Keratinocyte (primary cell): ENCODE measurements at regions of chr7 and their contacts with region 1.

Region 1: DNA sequence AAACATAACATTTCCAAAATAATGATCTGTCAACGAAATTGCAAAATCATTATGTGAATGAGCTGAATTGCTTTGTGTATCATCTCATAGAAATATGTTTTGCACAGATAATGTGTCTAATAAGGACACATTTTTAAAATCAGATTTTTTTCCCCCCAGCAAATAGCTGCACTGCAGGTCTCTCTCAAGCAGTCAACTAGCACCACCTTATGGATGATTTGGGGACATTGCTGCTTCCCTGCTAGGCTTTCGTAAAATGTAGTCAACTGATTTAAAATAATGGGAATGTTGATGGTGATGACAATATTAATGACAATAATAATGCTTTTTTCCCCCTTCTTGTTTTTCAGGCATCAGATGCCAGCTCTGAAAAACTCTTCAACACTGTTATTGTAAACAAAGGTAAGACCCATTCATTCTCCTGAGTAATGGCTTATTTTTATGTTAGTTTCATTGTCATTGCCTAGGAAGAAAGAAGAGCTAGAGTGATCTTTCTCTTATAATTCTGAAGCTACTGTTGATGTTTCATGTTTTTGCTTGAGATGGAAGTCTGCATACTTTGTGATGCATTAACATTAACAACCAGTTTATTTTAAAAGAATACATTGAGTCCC is 433.6 kb upstream of the GALNT17 start:
- DNase-seq: no peak
- H3K4me3 ChIP-seq: no peak overlapping the region
- H3K27ac ChIP-seq: no peak overlapping the region
- H3K4me1 ChIP-seq: peaks cover 26% of the 10 kb centered on the region
- H3K27me3 ChIP-seq: no peaks in the 10 kb centered on the region
- CTCF ChIP-seq: peak; percentile 75 to 84 (median 80)

Region 2: GRCh38 chr7:70595753-70596597 is 102.4 kb before region 1 on chr7:
- dilution Hi-C with region 1: loop called (anchors 5 kb)
- DNase-seq: no peak
- H3K4me3 ChIP-seq: peak overlapping the region; percentile 62 to 89 (median 74)
- H3K27ac ChIP-seq: peak overlapping the region; percentile 57
- H3K4me1 ChIP-seq: peaks cover 43% of the 10 kb centered on the region
- H3K27me3 ChIP-seq: no peaks in the 10 kb centered on the region
- CTCF ChIP-seq: no peak

Region 3: DNA sequence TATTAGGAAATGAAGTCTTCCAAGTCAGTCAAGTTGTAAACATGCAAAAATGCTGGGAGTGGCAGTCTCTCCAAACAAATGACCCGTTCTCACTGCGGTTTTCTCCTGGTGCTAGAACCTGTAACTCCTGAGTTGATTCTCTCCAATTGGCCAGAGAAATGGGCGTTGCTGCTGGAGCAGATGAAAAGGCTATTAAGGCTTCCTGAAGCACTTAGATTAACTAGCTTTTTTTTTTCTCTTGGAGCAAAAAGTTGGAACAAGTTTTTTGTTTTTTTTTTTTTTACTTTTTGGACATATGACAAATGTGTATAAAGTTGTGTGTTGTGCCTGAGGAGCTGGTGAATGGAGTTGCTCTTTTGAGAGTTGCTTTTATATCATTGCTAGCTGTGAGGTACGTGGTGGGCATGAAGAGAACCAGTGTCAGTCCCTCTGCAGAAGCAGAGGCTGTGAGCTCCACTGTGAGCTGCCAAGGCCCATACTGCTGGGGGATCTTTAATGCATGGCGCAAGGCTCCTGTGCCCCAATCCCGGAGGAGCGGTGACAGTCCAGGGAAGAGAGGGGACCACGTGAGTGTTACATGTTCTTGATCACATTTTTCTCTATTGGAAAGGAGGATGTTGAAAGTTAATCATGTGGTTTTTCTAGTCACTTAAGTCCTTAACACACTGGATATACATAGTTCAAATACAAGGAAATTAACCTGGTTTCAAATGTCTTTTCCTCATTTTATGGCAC is 40.0 kb after region 1 on chr7:
- dilution Hi-C with region 1: no loop called
- DNase-seq: no peak
- H3K4me3 ChIP-seq: no peak overlapping the region
- H3K27ac ChIP-seq: peak overlapping the region; percentile 10
- H3K4me1 ChIP-seq: peaks cover 42% of the 10 kb centered on the region
- H3K27me3 ChIP-seq: no peaks in the 10 kb centered on the region
- CTCF ChIP-seq: peak in 2 of 3 experiments; percentile 33 to 36